Activated naive CD8-positive, alpha-beta T cell treated with anti-CD3 and anti-CD28 coated beads, Interleukin-2, amount 10 ng/mL, durations not matched to agents 7 days and 5 days (primary cell): ENCODE measurements at regions of chr1 and their contacts with region 1.

Region 1: DNA sequence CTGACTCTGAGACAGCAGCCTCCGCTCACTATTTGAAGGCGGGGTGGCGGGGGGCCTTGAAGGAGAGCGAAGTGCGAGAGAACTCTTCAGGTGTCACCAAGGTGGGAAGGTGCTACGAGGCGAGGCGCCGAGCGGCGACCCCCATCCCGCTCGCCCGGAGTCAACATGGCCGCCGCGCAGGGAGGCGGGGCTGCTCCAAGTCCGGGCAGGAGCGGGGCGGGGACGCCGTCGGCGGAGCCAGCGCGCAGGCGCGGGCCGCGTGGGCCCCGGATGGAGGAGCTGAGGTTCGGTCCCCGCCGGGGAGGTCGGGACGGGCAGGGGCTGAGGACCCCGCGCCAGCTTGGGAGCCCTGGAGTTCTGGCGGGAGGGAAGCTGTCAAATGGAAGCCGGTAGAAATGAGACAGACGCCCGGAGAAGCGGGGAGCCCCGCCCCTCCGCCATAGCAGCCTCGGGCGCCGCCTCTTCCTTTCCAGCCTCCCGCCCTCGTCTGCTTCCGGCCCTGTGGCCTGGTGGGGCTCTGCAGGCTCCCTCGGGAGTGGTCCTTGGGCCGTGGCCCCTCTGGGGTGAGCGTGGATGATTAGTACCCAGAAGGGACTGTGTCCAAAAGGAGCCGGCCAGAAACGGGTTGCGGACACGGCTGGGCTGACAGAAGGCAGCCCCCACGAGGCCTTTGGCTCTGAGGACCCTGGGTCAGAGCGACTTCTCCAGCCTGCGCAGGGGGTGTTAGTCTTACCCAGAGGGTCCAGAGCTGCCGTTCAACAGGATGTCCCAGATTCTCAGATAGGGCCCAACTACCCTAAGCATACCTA is at the start of gene PIGV:
- DNase-seq: peak; percentile 96
- ATAC-seq: peak; percentile 59
- H3K4me3 Mint-ChIP-seq: peak within 1 kb of the TSS; percentile 99
- H3K27ac Mint-ChIP-seq: peak within 1 kb of the TSS; percentile 100
- H3K4me1 Mint-ChIP-seq: peaks cover 68% of the 10 kb centered on the region
- H3K27me3 Mint-ChIP-seq: no peaks in the 10 kb centered on the region
- total RNA-seq, gene PIGV: 21.5 TPM

Region 2: GRCh38 chr1:26500488-26501175 is 287.3 kb before region 1 on chr1:
- POLR2A ChIA-PET with region 1: interaction called, 16 read pairs
- DNase-seq: peak; percentile 97
- ATAC-seq: peak; percentile 68
- H3K4me3 Mint-ChIP-seq: peak overlapping the region; percentile 89
- H3K27ac Mint-ChIP-seq: peak overlapping the region; percentile 95
- H3K4me1 Mint-ChIP-seq: peaks cover 19% of the 10 kb centered on the region
- H3K27me3 Mint-ChIP-seq: no peaks in the 10 kb centered on the region

Region 3: GRCh38 chr1:26602378-26602959 is 185.4 kb before region 1 on chr1:
- POLR2A ChIA-PET with region 1: interaction called, 34 read pairs
- DNase-seq: no peak
- ATAC-seq: no peak
- H3K4me3 Mint-ChIP-seq: no peak overlapping the region
- H3K27ac Mint-ChIP-seq: no peak overlapping the region
- H3K4me1 Mint-ChIP-seq: peaks cover 11% of the 10 kb centered on the region
- H3K27me3 Mint-ChIP-seq: peaks cover 6% of the 10 kb centered on the region

Region 4: GRCh38 chr1:26723013-26723991 is 64.6 kb before region 1 on chr1:
- POLR2A ChIA-PET with region 1: interaction called, 10 read pairs
- DNase-seq: peak; percentile 39
- ATAC-seq: peak; percentile 68
- H3K4me3 Mint-ChIP-seq: peak overlapping the region; percentile 51
- H3K27ac Mint-ChIP-seq: peak overlapping the region; percentile 5
- H3K4me1 Mint-ChIP-seq: peaks cover 67% of the 10 kb centered on the region
- H3K27me3 Mint-ChIP-seq: no peaks in the 10 kb centered on the region

Region 5: GRCh38 chr1:26799479-26800142 is 11.7 kb after region 1 on chr1:
- POLR2A ChIA-PET with region 1: interaction called, 75 read pairs
- DNase-seq: no peak
- ATAC-seq: peak; percentile 70
- H3K4me3 Mint-ChIP-seq: peak overlapping the region; percentile 67
- H3K27ac Mint-ChIP-seq: peak overlapping the region; percentile 93
- H3K4me1 Mint-ChIP-seq: peaks cover 41% of the 10 kb centered on the region
- H3K27me3 Mint-ChIP-seq: no peaks in the 10 kb centered on the region

Region 6: GRCh38 chr1:26993237-26994019 is 205.5 kb after region 1 on chr1 and contains the start of gene TRNP1:
- POLR2A ChIA-PET with region 1: no interaction called
- DNase-seq: peak; percentile 75
- ATAC-seq: peak; percentile 51
- H3K4me3 Mint-ChIP-seq: peak within 1 kb of the TSS; percentile 80
- H3K27ac Mint-ChIP-seq: no peak within 1 kb of the TSS
- H3K4me1 Mint-ChIP-seq: peaks cover 13% of the 10 kb centered on the region
- H3K27me3 Mint-ChIP-seq: peaks cover 73% of the 10 kb centered on the region
- total RNA-seq, gene TRNP1: not detected